H1 (cell line): ENCODE measurements at regions of chr1 and their contacts with region 1.

Region 1: DNA sequence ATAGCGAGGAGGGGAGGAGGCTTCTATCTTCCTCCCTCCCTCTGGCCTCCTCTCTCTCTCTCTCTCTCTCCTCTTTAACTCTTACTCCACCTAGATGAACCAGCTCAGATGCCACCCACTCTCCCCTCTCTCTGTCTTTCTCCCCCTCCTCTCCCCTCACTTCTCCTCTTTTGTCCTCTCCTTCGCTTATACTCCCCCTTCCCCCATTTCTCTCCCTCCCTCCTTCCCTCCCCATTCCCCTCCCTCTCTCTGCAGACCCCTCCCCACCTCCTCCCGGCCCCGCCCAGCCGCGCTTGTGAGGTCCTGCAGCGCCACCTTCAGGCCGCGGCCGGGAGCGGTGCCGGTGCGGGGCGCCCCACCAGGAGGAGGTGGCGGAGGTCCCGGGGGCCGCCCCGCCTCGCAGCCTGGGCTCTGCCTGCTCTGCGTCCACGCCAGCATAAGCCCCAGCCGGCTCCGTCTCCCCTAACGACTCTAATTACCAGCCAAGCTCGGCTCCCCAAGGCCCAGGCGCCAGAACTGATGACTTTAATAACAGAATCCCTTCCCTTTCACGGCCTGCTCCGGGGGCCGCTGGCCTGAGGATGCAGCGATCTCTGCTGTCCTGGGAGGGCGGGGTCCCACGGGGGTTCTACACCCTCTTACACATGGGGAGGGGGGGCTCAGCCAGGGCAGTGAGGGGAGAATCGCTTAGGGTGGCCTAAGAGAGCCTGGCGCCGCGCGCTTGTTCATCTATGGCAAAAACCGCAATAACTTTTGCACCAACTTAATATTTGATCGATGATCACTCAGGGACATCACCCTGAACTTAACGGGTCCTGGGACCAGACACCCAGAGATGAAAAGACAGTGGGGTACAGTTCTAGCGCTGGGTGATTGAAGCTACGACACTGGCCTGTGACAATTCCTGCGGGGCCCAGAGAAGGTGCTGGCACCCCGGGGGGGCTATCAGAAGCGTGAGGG is 637.3 kb downstream of the MATN1 start:
- DNase-seq: peak; percentile 57 to 98
- H3K4me3 ChIP-seq: peak overlapping the region in 3 of 4 experiments; percentile 9 to 53 (median 19); a peak in 4 of 8 replicates
- H3K27ac ChIP-seq: no peak overlapping the region
- H3K4me1 ChIP-seq: peaks cover 0 to 10% (median 3%) of the 10 kb centered on the region in 4 experiments; a peak in 5 of 7 replicates
- H3K27me3 ChIP-seq: no peaks in the 10 kb centered on the region; a peak in 1 of 7 replicates
- CTCF ChIP-seq: peak; percentile 67 to 92 (median 77)
- EP300 ChIP-seq: no peak
- POLR2A ChIP-seq: no peak
- RAD21 ChIP-seq: peak; percentile 88 to 90

Region 2: GRCh38 chr1:29912425-29912824 is 173.7 kb before region 1 on chr1:
- CTCF ChIA-PET with region 1: interaction called, 11 read pairs
- POLR2A ChIA-PET with region 1: no interaction called
- DNase-seq: no peak
- H3K4me3 ChIP-seq: no peak overlapping the region
- H3K27ac ChIP-seq: no peak overlapping the region
- H3K4me1 ChIP-seq: peaks cover 0 to 4% (median 3%) of the 10 kb centered on the region in 4 experiments; a peak in 6 of 7 replicates
- H3K27me3 ChIP-seq: no peaks in the 10 kb centered on the region
- CTCF ChIP-seq: peak in 1 of 3 experiments; percentile 40; a peak in 2 of 4 replicates
- EP300 ChIP-seq: no peak
- POLR2A ChIP-seq: no peak
- RAD21 ChIP-seq: peak; percentile 52 to 56

Region 3: DNA sequence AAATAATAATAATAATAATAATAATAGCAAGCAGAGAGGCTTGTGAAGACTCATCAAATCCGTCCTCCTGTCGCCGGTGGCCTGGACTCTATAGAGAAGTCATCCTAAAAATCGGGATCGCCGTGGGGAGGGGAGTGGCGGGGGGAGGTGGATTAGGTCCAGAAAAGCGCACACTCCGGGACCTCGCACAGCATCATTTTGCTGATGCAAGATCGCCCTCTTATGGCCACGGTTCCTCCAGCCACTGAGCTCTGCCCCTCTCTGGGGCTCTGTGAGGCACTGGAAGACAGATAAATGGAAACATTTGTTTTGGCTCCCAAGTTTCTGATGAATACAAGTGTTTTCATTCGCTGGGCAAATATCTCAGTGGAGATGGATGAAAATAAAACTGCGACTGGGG is 25.3 kb after region 1 on chr1:
- CTCF ChIA-PET with region 1: interaction called, 19 read pairs
- POLR2A ChIA-PET with region 1: no interaction called
- DNase-seq: peak; percentile 34 to 77
- H3K4me3 ChIP-seq: peak overlapping the region in 1 of 4 experiments; percentile 33; a peak in 1 of 8 replicates
- H3K27ac ChIP-seq: no peak overlapping the region
- H3K4me1 ChIP-seq: no peaks in the 10 kb centered on the region
- H3K27me3 ChIP-seq: no peaks in the 10 kb centered on the region
- CTCF ChIP-seq: peak; percentile 79 to 85 (median 80)
- EP300 ChIP-seq: no peak
- POLR2A ChIP-seq: no peak
- RAD21 ChIP-seq: peak; percentile 88